CD8-positive, alpha-beta T cell (primary cell): ENCODE measurements at regions of chr18 and their contacts with region 1.

Region 1: DNA sequence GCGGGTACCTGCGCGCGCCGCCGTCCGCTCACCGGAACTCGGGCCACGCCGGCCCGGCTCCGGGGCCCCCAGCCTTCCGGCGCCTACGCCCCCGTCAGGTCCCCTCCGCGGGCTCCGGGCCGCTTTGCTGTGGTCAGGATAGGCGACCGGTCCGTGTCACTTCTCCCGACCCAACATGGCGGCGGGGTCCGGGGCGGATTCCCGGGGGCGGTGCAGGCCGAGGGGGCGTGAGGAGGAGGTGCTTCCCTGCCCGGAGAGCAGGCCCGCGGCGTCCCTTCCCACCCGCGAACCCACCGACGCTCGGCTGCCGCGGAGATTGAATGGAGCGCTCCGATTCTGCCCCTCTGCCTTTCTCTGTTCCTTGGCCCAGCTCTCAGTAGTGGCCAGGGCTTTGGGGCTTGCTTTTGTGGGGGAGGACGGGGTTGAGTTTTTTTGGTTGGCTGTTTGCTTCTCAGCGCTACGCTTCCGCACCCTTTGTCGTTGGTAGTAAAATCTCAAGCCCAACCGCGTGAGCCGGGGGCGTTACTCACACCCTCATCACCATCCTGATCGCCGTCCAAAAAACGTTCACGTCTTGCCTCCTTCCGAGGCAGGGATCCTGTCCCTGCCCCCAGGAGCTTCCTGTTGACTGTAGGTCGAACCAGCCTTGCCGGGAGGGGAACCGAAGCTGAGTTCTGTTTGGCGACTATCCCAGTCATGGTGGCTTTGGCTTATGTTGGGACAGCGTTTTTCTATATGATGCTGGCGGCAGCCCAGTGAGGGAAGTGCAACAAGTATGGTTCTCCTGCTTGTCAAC is 532 bp upstream of the YES1 start:
- DNase-seq: peak; percentile 55 to 93 (median 79)
- ATAC-seq: peak; percentile 68
- H3K4me3 ChIP-seq: peak overlapping the region; percentile 80 to 90
- H3K4me3 Mint-ChIP-seq: peak overlapping the region; percentile 93
- H3K27ac ChIP-seq: peak overlapping the region; percentile 81 to 98
- H3K27ac Mint-ChIP-seq: peak overlapping the region; percentile 98
- H3K4me1 ChIP-seq: peaks cover 55% of the 10 kb centered on the region
- H3K4me1 Mint-ChIP-seq: peaks cover 71% of the 10 kb centered on the region
- H3K27me3 ChIP-seq: no peaks in the 10 kb centered on the region
- H3K27me3 Mint-ChIP-seq: no peaks in the 10 kb centered on the region
- CTCF ChIP-seq: no peak

Region 2: GRCh38 chr18:158128-159036 is 654.2 kb before region 1 on chr18 and contains the start of gene USP14:
- CTCF ChIA-PET with region 1: no interaction called
- POLR2A ChIA-PET with region 1: no interaction called
- intact Hi-C with region 1: loop called (anchors 2 to 5 kb)
- DNase-seq: peak; percentile 93 to 99 (median 97)
- ATAC-seq: peak; percentile 92
- H3K4me3 ChIP-seq: peak within 1 kb of the TSS; percentile 64 to 81
- H3K4me3 Mint-ChIP-seq: peak within 1 kb of the TSS; percentile 88
- H3K27ac ChIP-seq: peak within 1 kb of the TSS; percentile 59 to 83
- H3K27ac Mint-ChIP-seq: peak within 1 kb of the TSS; percentile 95
- H3K4me1 ChIP-seq: peaks cover 22% of the 10 kb centered on the region
- H3K4me1 Mint-ChIP-seq: peaks cover 35% of the 10 kb centered on the region
- H3K27me3 ChIP-seq: no peaks in the 10 kb centered on the region
- H3K27me3 Mint-ChIP-seq: no peaks in the 10 kb centered on the region
- CTCF ChIP-seq: no peak
- total RNA-seq, gene USP14: 61.3 to 64.1 TPM

Region 3: GRCh38 chr18:596288-596881 is 216.2 kb before region 1 on chr18:
- CTCF ChIA-PET with region 1: no interaction called
- POLR2A ChIA-PET with region 1: no interaction called
- intact Hi-C with region 1: loop called in 1 of 2 experiments (anchors 5 kb)
- DNase-seq: peak in 4 of 9 experiments; percentile 63 to 81 (median 70)
- ATAC-seq: peak; percentile 66
- H3K4me3 ChIP-seq: no peak overlapping the region
- H3K4me3 Mint-ChIP-seq: peak overlapping the region; percentile 57
- H3K27ac ChIP-seq: no peak overlapping the region
- H3K27ac Mint-ChIP-seq: peak overlapping the region; percentile 52
- H3K4me1 ChIP-seq: peaks cover 11% of the 10 kb centered on the region
- H3K4me1 Mint-ChIP-seq: peaks cover 12% of the 10 kb centered on the region
- H3K27me3 ChIP-seq: peaks cover 0 to 5% of the 10 kb centered on the region in 2 experiments
- H3K27me3 Mint-ChIP-seq: peaks cover 31% of the 10 kb centered on the region
- CTCF ChIP-seq: no peak

Region 4: DNA sequence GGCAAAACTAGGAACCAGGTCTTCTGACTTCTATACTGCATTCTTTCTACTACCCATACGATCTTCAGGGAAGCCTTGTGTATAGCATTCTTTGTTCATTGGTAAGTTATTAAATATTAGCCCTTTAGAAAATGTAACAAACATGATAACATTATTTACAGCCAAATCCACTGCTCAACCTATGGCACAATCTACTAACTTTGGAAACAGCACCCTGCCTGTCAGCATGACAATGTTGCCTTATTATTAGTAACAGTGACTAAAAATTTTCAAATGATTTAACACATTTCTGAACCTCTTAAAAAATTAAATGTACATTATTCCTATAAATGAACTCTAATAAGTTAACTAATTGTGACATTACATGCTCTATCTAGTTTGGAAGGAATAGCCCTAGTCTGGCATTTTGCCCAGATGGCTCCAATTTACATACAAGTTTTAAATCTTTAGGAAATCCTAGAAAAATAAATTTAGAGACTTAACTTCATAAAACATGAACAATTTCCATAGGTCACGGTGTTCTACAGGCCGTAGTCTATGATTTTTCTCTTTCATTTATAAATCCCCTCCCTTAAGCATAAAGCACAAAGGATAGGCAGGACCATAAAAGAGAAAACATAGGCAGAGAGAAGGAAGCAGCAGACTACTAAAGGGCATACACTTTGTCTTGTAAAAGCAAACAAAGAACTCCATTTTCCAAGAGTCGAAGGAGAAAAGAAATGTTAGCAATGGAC is 34.2 kb before region 1 on chr18:
- CTCF ChIA-PET with region 1: no interaction called
- POLR2A ChIA-PET with region 1: no interaction called
- intact Hi-C with region 1: loop called in 1 of 2 experiments (anchors 5 kb)
- DNase-seq: no peak
- ATAC-seq: no peak
- H3K4me3 ChIP-seq: no peak overlapping the region
- H3K4me3 Mint-ChIP-seq: no peak overlapping the region
- H3K27ac ChIP-seq: no peak overlapping the region
- H3K27ac Mint-ChIP-seq: no peak overlapping the region
- H3K4me1 ChIP-seq: no peaks in the 10 kb centered on the region
- H3K4me1 Mint-ChIP-seq: peaks cover 61% of the 10 kb centered on the region
- H3K27me3 ChIP-seq: no peaks in the 10 kb centered on the region
- H3K27me3 Mint-ChIP-seq: no peaks in the 10 kb centered on the region
- CTCF ChIP-seq: no peak

Region 5: DNA sequence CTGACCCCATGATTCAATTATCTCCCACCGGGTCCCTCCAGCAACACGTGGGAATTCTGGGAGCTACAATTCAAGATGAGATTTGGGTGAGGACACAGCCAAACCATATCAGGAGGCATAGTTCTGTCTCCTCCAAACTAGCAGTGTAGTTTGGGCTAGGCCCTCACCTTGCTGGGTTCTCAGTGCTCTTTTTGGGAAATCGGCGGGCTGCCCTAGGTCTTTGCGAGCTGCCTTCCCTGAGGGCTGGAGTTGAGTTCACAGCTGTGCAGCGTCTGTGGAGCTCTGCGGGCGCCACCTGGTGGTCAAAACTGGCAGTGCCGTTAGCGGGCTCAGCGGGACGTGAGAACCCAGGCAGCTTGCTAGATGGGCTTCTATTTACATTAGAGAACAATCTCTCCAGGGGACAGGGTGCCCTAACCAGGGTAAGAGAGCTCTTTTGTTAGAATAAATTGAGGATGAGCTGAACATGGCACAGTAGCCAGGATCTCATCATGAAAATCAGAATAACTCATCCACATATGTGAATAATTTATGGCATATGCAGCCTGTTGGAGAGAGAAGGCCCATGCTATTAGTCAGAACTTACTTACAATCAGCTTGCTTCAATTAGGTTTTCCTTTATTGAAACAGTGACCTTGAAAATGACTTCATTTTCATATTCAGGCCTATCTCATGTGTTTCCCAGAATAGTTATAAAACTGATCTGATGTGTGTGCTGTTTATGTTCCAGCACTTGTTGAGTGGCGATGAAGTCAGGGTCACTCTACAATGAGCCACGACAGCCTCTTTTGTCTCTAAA is 26.8 kb after region 1 on chr18:
- CTCF ChIA-PET with region 1: interaction called, 14 read pairs
- POLR2A ChIA-PET with region 1: interaction called, 5 read pairs
- intact Hi-C with region 1: no loop called
- DNase-seq: peak; percentile 77 to 95 (median 85)
- ATAC-seq: peak; percentile 97
- H3K4me3 ChIP-seq: no peak overlapping the region
- H3K4me3 Mint-ChIP-seq: no peak overlapping the region
- H3K27ac ChIP-seq: no peak overlapping the region
- H3K27ac Mint-ChIP-seq: no peak overlapping the region
- H3K4me1 ChIP-seq: peaks cover 4% of the 10 kb centered on the region
- H3K4me1 Mint-ChIP-seq: peaks cover 4% of the 10 kb centered on the region
- H3K27me3 ChIP-seq: no peaks in the 10 kb centered on the region
- H3K27me3 Mint-ChIP-seq: no peaks in the 10 kb centered on the region
- CTCF ChIP-seq: peak; percentile 95

Region 6: GRCh38 chr18:877238-877637 is 64.7 kb after region 1 on chr18:
- CTCF ChIA-PET with region 1: no interaction called
- POLR2A ChIA-PET with region 1: no interaction called
- intact Hi-C with region 1: no loop called
- DNase-seq: no peak
- ATAC-seq: no peak
- H3K4me3 ChIP-seq: no peak overlapping the region
- H3K4me3 Mint-ChIP-seq: no peak overlapping the region
- H3K27ac ChIP-seq: no peak overlapping the region
- H3K27ac Mint-ChIP-seq: no peak overlapping the region
- H3K4me1 ChIP-seq: peaks cover 4% of the 10 kb centered on the region
- H3K4me1 Mint-ChIP-seq: peaks cover 14% of the 10 kb centered on the region
- H3K27me3 ChIP-seq: no peaks in the 10 kb centered on the region
- H3K27me3 Mint-ChIP-seq: peaks cover 7% of the 10 kb centered on the region
- CTCF ChIP-seq: no peak